Gastrocnemius medialis (tissue), 4 donors: ENCODE measurements at regions of chr1 and their contacts with region 1.

Region 1: GRCh38 chr1:56570924-56571372 is 8.4 kb downstream of the PLPP3 start:
- DNase-seq: no peak
- ATAC-seq: peak; percentile 38 to 50
- H3K4me3 ChIP-seq: peak overlapping the region in 1 of 4 donors; percentile 2
- H3K27ac ChIP-seq: peak overlapping the region; percentile 23 to 73 (median 24)
- H3K4me1 ChIP-seq: peaks cover 57 to 73% of the 10 kb centered on the region in 2 donors
- H3K27me3 ChIP-seq: no peaks in the 10 kb centered on the region
- CTCF ChIP-seq: no peak
- POLR2A ChIP-seq: no peak

Region 2: GRCh38 chr1:56074007-56074651 is 496.8 kb before region 1 on chr1:
- in situ Hi-C with region 1: no loop called
- intact Hi-C with region 1: loop called (anchors 5 kb)
- DNase-seq: peak; percentile 59 to 75
- ATAC-seq: peak; percentile 73
- H3K4me3 ChIP-seq: peak overlapping the region in 1 of 4 donors; percentile 1
- H3K27ac ChIP-seq: peak overlapping the region; percentile 70 to 82 (median 76)
- H3K4me1 ChIP-seq: peaks cover 21 to 23% of the 10 kb centered on the region in 2 donors
- H3K27me3 ChIP-seq: no peaks in the 10 kb centered on the region
- CTCF ChIP-seq: no peak
- POLR2A ChIP-seq: no peak

Region 3: DNA sequence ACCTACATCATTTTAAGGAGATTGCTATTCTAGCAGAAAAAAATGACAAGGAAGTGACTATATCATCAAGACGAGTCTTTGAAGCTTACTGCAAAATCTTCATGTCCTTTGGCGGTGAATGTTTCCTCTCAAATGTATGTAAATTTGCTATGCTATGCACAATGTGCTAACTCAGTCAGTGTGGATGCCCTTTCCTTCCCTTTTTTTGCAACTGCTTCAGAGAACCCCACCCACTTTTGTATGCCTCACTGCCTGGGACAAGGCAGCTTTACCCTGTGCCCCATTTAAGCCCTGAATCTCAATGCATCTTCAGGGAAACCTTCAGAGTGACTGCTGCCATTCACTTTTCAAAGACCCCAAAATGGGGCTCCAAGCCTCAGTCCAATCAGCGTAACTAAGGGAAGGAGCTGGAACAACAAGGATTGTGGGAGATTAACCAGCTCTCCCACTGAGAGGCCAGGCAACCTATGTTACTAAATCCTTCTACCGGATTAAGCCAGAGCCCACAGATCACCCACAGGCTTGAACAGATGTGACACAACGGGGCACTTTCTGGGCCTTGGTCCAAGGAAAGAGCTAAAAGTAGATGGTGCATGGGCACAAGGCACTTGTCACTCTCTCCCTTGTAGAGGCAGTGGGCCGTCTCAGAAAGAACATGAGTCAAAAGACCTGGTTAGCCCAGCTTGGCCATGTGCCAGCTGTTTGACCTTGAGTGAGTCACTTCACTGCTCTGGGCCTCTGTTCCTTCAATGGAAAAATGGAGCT is 146.0 kb before region 1 on chr1:
- in situ Hi-C with region 1: no loop called
- intact Hi-C with region 1: loop called (anchors 5 kb)
- DNase-seq: peak; percentile 74 to 92
- ATAC-seq: peak; percentile 91 to 98
- H3K4me3 ChIP-seq: no peak overlapping the region
- H3K27ac ChIP-seq: peak overlapping the region; percentile 34 to 50 (median 49)
- H3K4me1 ChIP-seq: peaks cover 5 to 9% of the 10 kb centered on the region in 2 donors
- H3K27me3 ChIP-seq: no peaks in the 10 kb centered on the region
- CTCF ChIP-seq: no peak
- POLR2A ChIP-seq: no peak

Region 4: DNA sequence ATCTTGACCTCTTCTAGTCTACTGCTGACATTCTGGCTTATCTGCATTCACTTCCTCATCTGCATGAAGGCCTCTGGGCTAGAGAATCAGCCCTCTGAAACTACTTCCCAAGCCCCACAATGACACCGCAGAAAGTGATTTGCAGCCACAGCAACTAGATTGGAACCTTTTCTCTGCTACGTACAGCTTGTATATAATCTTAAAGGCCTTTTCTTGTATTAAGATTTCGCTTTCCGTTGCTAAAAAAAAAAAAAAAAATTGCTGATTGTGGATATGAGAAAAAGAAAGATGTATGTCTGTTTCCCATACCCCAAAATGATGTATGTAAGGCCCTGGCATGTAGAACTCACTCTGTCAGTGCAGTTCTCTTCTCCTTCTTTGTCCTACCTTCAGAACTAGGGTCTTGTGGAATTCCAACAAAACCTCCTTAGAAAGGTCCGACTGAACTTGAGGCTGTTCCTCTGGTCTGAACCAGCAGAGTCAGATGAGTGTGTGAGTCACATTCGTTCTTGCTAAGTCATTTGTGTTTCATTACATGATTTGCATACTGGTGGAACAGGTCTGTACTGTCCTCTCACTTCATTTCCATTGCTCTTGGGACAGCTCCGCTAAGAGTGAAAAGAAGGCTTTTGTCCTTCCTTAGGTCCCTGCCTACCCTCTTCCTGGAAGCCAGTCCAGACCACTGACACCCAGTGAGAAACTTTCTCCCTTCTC is 54.3 kb before region 1 on chr1:
- in situ Hi-C with region 1: loop called in 1 of 4 experiments (anchors 10 kb)
- intact Hi-C with region 1: no loop called
- DNase-seq: no peak
- ATAC-seq: no peak
- H3K4me3 ChIP-seq: no peak overlapping the region
- H3K27ac ChIP-seq: peak overlapping the region in 2 of 4 donors; percentile 20 to 41
- H3K4me1 ChIP-seq: peaks cover 14 to 23% of the 10 kb centered on the region in 2 donors
- H3K27me3 ChIP-seq: no peaks in the 10 kb centered on the region
- CTCF ChIP-seq: no peak
- POLR2A ChIP-seq: no peak

Region 5: GRCh38 chr1:56627636-56628039 is 56.7 kb after region 1 on chr1:
- in situ Hi-C with region 1: no loop called
- intact Hi-C with region 1: no loop called
- DNase-seq: no peak
- ATAC-seq: no peak
- H3K4me3 ChIP-seq: no peak overlapping the region
- H3K27ac ChIP-seq: no peak overlapping the region
- H3K4me1 ChIP-seq: no peaks in the 10 kb centered on the region
- H3K27me3 ChIP-seq: no peaks in the 10 kb centered on the region
- CTCF ChIP-seq: no peak
- POLR2A ChIP-seq: no peak